ENCODE measurements at regions of chr3 and their contacts with region 1.

Region 1: DNA sequence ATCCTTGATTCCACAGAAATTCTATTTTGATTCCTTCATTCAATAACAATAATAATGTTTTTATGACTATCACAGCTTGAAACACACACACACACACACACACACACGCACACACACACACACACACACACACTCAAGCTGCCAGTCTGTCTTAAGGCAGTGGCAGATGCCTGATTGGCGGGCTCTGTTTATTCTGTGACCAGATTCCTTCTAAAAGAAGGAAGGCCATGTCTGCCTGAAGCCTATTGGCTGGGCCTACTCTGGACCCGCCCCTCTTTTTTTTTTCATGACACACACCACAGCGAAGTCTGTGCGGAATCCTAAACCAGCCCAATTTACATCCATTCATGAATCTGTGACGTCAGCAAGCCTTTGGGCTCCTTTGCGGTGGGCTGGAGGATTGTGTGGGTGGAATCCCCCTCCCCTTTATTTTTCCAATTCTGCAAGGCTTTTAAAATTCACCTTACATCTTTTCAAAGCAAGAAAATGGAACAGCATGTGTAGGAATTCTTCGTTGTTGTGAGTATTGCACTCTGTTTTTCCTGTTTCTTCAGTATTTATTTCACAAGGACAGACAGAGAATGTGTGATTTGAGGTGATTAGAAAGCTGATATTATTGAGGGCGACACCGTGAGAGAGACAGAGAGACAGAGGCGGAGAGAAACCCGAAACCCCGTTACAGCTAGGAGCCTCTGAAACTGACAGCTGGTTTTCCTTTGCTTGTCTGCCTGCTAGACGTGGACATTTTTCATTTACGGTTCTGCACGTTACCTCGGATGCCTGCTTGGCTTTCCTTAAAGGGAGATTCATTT is at the start of gene MAP3K13:
- DNase-seq: peak; percentile 80
- ATAC-seq: peak; percentile 100
- total RNA-seq, gene MAP3K13: 8.0 TPM

Region 2: GRCh38 chr3:185552358-185552877 is 189.4 kb after region 1 on chr3 and contains the start of gene LIPH:
- intact Hi-C with region 1: loop called (anchors 10 kb)
- DNase-seq: no peak
- ATAC-seq: no peak
- total RNA-seq, gene LIPH: 0.22 TPM